ENCODE measurements at regions of chr11 and their contacts with region 1.

Region 1: GRCh38 chr11:126716456-126717083 is 284.0 kb downstream of the KIRREL3 start:
- DNase-seq: peak; percentile 53
- H3K4me3 Mint-ChIP-seq: no peak overlapping the region
- H3K27ac Mint-ChIP-seq: no peak overlapping the region
- H3K4me1 Mint-ChIP-seq: no peaks in the 10 kb centered on the region
- H3K27me3 Mint-ChIP-seq: peaks cover 28% of the 10 kb centered on the region

Region 2: DNA sequence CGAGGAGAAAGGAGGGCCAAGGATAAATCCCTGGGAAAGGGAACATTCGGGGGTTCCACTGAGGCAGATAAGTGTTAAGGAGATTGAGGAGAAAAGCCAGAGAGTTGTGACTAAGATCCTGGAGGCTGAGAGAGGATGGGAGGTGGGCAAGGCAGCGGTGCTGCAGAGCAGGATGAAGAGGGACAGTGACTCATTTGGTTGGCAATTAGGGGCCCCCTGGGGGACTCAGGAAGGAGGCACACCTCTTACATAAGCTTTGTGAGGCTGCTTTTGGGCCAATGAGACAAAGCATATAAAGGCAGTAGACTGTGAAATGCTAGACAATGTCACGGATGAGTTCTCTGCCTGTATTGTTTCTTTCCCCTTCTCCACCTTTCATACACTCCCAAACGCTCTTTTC is 530.7 kb after region 1 on chr11:
- CTCF ChIA-PET with region 1: no interaction called
- intact Hi-C with region 1: no loop called
- DNase-seq: no peak
- H3K4me3 Mint-ChIP-seq: no peak overlapping the region
- H3K27ac Mint-ChIP-seq: no peak overlapping the region
- H3K4me1 Mint-ChIP-seq: no peaks in the 10 kb centered on the region
- H3K27me3 Mint-ChIP-seq: no peaks in the 10 kb centered on the region

Region 3: DNA sequence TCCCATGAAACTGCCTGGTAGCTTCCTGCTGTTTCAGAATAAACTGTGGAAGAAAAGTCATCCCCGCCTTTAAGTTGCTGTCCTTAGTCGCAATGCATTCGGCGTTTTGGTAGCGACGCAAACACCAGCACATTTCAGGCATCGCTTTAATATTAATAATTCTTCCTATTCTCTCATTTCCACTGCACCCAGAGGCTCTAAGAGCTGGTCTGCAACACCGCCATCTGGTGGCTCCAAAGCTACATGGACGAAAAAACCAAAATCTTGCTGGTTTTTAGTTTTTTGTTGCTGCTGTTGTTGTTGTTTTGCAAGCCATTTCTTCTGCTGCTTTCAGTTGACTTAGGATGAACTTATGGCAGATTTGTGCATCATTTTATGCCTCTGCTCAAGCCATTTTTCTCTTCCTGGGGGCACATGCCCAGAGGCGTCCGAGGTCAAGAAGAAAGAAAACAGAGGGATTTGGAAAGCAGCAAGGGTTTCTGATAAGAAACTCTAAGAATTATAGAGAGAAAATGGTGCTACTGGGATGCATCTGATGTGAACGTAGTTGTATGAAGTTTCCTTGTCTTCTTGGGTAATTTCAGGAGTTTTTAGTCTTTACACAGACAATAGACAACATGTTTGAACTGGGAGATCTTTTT is 629.4 kb after region 1 on chr11:
- CTCF ChIA-PET with region 1: interaction called, 3 read pairs
- intact Hi-C with region 1: loop called (anchors 5 kb)
- DNase-seq: peak; percentile 28
- H3K4me3 Mint-ChIP-seq: no peak overlapping the region
- H3K27ac Mint-ChIP-seq: no peak overlapping the region
- H3K4me1 Mint-ChIP-seq: no peaks in the 10 kb centered on the region
- H3K27me3 Mint-ChIP-seq: peaks cover 8% of the 10 kb centered on the region